ENCODE measurements at regions of chr7 and their contacts with region 1.

Region 1: DNA sequence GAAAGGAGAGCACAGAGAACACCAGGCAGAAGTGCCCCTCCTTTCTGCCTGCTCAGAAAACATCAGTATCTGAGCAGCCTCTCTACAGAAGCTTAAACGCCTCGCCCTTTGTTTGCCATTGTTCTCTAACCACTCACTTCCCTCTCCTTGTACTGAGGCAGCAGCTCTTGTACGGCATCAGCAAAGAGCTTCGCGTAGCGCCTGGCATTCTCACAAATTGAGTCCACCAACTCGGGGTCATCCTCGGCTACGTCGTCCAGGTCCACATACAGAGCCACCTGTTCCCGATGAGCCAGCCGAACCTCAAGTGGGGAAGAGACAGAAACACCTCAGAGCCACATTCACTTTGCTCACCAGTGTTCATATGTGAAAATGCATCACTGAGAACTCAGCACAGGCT is 1.7 kb downstream of the MCM7 start:
- DNase-seq: no peak
- H3K4me3 ChIP-seq: peak overlapping the region in 1 of 3 donors; percentile 78
- H3K27ac ChIP-seq: no peak overlapping the region
- H3K4me1 ChIP-seq: peaks cover 11 to 17% of the 10 kb centered on the region in 2 donors
- H3K27me3 ChIP-seq: no peaks in the 10 kb centered on the region
- CTCF ChIP-seq: no peak
- POLR2A ChIP-seq: no peak

Region 2: DNA sequence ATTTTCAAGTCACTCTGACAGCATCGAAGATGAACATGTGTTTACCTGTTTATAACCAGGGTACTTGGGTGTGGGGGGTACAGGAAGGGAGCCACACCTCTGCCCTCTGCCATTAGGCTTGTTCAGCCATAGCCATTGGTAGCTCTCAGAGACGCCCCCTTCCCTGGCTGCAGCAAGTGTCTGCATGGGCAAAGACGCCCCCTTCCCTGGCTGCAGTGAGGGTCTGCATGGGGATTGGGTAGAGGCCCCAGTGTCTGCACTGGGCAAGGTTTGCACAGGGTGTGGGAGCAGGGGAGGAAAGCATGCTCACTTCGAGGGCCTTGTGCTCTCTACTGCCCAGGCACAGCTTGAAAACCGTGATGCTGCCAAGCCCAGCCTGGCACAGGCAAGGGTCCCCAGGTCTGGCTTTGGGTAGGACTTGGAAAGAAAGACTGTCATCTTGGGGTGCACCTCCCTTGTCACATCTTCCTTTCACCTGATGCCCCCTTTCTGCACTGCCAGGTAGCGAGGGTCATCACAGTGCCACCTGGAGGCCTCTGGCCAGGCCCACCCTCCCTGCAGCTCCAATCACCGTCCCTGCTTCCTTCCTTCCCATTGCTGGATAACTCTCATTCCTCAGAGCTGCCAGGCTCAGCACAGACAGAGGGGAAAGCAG is 497.7 kb before region 1 on chr7:
- intact Hi-C with region 1: no loop called
- DNase-seq: no peak
- H3K4me3 ChIP-seq: no peak overlapping the region
- H3K27ac ChIP-seq: no peak overlapping the region
- H3K4me1 ChIP-seq: no peaks in the 10 kb centered on the region
- H3K27me3 ChIP-seq: no peaks in the 10 kb centered on the region
- CTCF ChIP-seq: no peak
- POLR2A ChIP-seq: no peak

Region 3: DNA sequence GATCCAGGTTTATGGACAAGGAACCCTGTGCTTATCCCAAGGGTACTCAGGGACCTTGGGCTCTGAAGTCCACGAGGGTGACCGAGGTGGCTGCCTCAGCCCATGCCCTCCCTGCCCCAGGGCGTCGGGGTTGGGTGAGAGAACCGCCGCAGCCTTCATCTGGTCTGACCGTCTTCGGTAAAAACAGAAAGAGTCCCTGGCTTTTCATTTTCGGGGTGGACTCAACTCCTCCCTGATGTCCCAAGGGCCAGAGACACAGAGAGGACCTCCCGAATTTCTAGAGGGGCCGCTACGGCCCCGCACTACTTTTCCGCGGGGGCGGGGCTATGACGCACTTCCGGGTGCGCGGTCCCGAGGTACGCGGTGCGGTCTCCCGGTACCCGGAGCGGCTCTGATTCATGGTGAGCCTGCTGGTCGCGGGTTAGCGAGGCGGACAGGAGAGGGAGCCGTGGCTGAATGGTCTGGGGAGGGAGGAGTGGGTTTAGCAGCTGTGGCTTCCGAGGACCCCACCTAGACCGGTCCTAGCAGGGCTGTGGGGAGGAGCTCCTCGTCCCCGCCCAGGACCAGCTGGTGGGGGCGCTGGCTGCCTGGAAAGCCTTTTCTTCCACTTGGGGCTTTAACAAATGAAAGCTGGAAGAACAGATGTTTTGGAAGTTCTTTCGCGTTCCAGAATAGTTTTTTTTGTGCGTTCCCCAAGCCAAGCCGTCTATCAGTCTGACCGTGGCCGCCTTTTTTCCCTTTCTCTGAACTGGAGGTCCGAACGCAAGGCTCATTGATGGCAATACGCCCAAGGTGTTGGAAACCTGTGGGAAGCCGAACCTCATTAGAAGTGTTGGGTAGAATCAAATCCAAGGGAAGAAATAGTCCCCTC is 49.8 kb before region 1 on chr7 and contains the start of gene ZSCAN21:
- intact Hi-C with region 1: loop called (anchors 5 kb)
- DNase-seq: peak; percentile 79 to 80
- H3K4me3 ChIP-seq: peak within 1 kb of the TSS; percentile 50 to 56 (median 52)
- H3K27ac ChIP-seq: peak within 1 kb of the TSS; percentile 89 to 96 (median 96)
- H3K4me1 ChIP-seq: peaks cover 4 to 12% of the 10 kb centered on the region in 2 donors
- H3K27me3 ChIP-seq: no peaks in the 10 kb centered on the region
- CTCF ChIP-seq: peak in 2 of 6 experiments; percentile 14 to 25
- POLR2A ChIP-seq: peak in 1 of 2 donors; percentile 67
- total RNA-seq, gene ZSCAN21: 14.0 to 23.8 (median 19.2) TPM